Activated CD4-positive, alpha-beta memory T cell treated with anti-CD3 and anti-CD28 coated beads, Interleukin-2, amount 10 ng/mL, durations not matched to agents 7 days and 5 days (primary cell): ENCODE measurements at regions of chr20 and their contacts with region 1.

Region 1: DNA sequence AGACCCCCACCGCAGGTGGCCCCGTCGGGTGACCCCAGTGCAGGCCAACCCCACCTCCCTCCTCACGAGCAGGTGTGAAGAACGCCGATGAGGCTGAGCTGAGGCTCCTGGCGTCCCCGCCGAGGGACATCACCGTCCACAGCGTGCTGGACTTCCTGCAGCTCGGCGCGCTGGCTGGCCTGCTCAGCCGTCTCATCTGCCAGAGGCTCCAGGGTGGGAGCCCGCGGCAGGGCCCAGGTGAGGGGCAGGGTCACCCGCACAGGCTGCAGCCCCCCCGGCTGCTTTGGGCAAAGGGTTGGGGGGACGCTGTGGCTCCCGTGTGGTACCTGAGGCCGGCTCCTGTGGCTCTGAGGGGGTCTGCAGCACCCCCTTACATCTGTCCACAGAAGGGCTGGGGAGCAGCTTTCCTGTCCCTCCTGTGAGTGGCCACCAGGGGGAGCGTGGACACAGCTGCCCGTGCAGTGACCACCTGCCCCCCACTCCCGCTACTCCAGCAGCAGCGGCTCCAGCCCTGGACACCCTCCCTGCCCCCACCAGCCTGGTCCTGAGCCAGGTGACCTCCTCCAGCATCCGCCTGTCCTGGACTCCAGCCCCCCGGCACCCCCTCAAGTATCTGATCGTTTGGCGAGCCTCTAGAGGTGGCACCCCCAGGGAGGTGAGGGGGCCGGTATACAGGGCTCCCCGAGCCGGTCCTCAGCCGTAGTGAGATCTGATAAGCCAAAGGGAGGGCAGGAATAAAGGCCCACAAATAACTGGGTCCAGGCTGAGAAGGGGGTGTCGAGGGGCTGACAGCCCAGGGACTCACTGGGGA is 16.5 kb downstream of the COL20A1 start:
- DNase-seq: no peak
- H3K4me3 Mint-ChIP-seq: no peak overlapping the region
- H3K27ac Mint-ChIP-seq: no peak overlapping the region
- H3K4me1 Mint-ChIP-seq: no peaks in the 10 kb centered on the region
- H3K27me3 Mint-ChIP-seq: no peaks in the 10 kb centered on the region

Region 2: DNA sequence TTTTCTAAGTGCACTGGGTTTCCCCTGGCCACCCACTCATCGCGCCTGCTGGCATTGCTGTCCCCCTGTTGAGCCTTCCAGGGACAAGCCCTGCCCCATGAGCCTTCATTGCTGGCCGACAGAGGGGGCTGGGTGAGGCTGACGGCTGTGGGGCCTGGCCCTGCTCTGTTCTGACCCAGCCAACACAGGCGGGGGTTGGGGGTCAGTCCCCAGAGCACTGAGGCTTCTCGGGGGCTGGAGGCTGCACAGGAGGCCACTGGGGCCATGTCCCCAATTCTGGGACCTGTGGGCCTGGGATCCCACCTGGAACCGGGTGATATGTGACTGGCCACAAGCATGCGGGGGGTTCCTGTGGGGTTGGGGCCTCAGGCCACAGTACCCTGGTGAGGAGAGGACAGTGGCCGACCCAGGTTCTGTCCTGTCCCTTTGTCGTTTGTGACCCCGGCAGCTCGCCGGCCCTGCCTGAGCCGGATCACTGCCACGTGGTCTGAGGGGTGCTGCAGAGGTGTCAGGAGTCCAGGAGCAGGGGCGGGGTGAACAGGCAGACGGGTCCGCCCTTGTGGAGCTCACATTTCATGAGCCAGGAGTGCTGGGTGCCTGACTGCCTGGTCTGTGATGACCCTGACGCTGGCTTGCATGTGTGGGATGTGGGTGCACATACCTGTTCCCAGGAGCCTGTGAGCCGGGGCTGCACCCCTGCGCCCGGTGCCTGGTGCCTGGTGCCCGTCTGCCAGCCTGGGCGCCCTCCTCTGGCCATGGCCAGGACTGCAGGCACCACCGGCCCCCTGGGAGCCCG is 18.6 kb before region 1 on chr20:
- CTCF ChIA-PET with region 1: no interaction called
- POLR2A ChIA-PET with region 1: no interaction called
- DNase-seq: peak; percentile 66
- H3K4me3 Mint-ChIP-seq: no peak overlapping the region
- H3K27ac Mint-ChIP-seq: no peak overlapping the region
- H3K4me1 Mint-ChIP-seq: peaks cover 8% of the 10 kb centered on the region
- H3K27me3 Mint-ChIP-seq: peaks cover 6% of the 10 kb centered on the region

Region 3: DNA sequence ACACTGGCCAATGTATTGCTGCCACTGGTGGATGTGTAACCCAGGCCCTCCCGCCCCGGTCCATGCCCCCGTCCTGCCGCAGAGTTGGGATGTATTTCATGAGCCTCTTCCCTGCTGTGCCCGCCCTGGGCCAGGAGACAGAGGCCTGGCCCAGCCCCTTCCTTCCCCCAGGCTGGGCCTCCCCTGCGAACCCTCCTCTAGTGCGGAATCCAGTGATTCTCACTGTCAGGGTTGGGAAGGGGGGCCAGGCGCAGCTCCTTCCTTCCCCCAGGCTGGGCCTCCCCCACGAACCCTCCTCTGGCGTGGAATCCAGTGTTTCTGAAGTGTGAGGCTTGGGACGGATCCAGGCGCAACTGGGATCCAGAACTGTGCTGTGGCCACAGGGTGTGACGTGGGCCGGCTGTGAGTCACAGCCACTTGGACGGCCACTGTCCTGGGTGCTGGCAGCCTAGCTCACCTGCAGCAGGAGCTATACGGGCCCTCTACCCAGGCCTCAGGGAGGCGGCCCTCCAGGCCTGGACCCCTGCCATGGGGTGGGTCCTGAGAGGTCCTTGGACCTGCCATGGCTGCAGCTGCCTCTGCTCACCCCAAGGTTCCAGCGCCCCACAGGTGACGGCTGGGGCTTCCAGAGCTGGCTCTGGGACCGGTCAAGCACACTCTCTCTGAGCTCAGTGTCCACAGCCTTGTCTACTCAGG is 11.8 kb after region 1 on chr20:
- CTCF ChIA-PET with region 1: no interaction called
- POLR2A ChIA-PET with region 1: no interaction called
- DNase-seq: no peak
- H3K4me3 Mint-ChIP-seq: no peak overlapping the region
- H3K27ac Mint-ChIP-seq: no peak overlapping the region
- H3K4me1 Mint-ChIP-seq: no peaks in the 10 kb centered on the region
- H3K27me3 Mint-ChIP-seq: peaks cover 15% of the 10 kb centered on the region

Region 4: GRCh38 chr20:63381807-63382322 is 72.4 kb after region 1 on chr20:
- CTCF ChIA-PET with region 1: interaction called, 16 read pairs
- POLR2A ChIA-PET with region 1: no interaction called
- DNase-seq: peak; percentile 26
- H3K4me3 Mint-ChIP-seq: no peak overlapping the region
- H3K27ac Mint-ChIP-seq: no peak overlapping the region
- H3K4me1 Mint-ChIP-seq: no peaks in the 10 kb centered on the region
- H3K27me3 Mint-ChIP-seq: no peaks in the 10 kb centered on the region